ENCODE measurements at regions of chr19 and their contacts with region 1.

Region 1: GRCh38 chr19:15555759-15556633 is 47.7 kb downstream of the CYP4F22 start:
- DNase-seq: peak; percentile 89
- H3K4me3 ChIP-seq: peak overlapping the region in 2 of 3 experiments; percentile 7 to 13
- H3K27ac ChIP-seq: no peak overlapping the region
- H3K4me1 ChIP-seq: peaks cover 15% of the 10 kb centered on the region
- H3K27me3 ChIP-seq: no peaks in the 10 kb centered on the region
- CTCF ChIP-seq: peak; percentile 64 to 88

Region 2: GRCh38 chr19:15091901-15092753 is 463.9 kb before region 1 on chr19:
- CTCF ChIA-PET with region 1: no interaction called
- dilution Hi-C with region 1: no loop called
- in situ Hi-C with region 1: loop called (anchors 10 kb)
- intact Hi-C with region 1: loop called (anchors 1 kb)
- DNase-seq: peak; percentile 41
- H3K4me3 ChIP-seq: no peak overlapping the region
- H3K27ac ChIP-seq: no peak overlapping the region
- H3K4me1 ChIP-seq: peaks cover 5% of the 10 kb centered on the region
- H3K27me3 ChIP-seq: no peaks in the 10 kb centered on the region
- CTCF ChIP-seq: peak; percentile 51 to 58

Region 3: DNA sequence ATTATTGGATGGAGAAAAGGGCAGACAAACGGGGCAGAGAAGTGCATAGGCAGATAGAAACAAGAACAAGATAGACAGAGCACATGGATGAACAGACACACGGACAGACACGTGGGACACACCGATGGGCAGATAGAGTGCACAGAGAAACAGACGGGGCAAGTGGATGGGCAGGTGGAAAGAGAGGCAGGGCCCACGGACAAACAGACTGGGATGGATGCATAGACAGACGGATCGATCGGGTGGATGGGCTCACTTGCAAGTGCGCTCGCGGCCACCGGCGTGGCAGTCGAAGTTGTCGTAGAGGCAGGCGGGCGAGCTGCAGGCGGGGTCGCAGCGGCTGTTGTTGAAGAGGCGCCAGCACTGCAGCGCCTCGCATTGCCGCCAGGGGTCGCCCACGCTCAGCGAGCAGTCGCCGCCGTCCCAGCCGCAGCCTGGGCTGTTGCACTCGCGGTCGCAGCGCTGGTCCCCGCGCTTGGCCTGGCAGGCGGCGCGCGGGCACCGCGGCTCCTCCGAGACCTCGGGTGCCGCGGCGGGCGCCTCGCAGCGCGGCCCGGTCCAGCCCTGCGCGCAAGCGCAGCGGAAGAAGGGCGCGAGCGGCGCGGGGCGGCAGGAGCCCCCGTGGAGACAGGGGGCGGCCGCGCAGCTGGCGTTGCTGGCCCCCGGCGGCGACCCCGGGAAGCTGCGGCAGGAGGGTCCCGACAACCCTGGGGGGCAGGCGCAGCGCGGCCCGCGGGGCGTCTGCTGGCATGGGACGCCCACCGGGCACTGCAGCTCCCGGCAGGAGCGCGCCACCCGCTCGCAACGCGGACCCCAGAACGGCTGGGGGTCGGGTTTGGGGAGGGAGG is 378.5 kb before region 1 on chr19:
- CTCF ChIA-PET with region 1: no interaction called
- dilution Hi-C with region 1: no loop called
- in situ Hi-C with region 1: loop called (anchors 5 to 10 kb)
- intact Hi-C with region 1: loop called (anchors 1 kb)
- DNase-seq: peak; percentile 48
- H3K4me3 ChIP-seq: peak overlapping the region in 1 of 3 experiments; percentile 35
- H3K27ac ChIP-seq: no peak overlapping the region
- H3K4me1 ChIP-seq: peaks cover 15% of the 10 kb centered on the region
- H3K27me3 ChIP-seq: no peaks in the 10 kb centered on the region
- CTCF ChIP-seq: peak; percentile 74 to 79

Region 4: DNA sequence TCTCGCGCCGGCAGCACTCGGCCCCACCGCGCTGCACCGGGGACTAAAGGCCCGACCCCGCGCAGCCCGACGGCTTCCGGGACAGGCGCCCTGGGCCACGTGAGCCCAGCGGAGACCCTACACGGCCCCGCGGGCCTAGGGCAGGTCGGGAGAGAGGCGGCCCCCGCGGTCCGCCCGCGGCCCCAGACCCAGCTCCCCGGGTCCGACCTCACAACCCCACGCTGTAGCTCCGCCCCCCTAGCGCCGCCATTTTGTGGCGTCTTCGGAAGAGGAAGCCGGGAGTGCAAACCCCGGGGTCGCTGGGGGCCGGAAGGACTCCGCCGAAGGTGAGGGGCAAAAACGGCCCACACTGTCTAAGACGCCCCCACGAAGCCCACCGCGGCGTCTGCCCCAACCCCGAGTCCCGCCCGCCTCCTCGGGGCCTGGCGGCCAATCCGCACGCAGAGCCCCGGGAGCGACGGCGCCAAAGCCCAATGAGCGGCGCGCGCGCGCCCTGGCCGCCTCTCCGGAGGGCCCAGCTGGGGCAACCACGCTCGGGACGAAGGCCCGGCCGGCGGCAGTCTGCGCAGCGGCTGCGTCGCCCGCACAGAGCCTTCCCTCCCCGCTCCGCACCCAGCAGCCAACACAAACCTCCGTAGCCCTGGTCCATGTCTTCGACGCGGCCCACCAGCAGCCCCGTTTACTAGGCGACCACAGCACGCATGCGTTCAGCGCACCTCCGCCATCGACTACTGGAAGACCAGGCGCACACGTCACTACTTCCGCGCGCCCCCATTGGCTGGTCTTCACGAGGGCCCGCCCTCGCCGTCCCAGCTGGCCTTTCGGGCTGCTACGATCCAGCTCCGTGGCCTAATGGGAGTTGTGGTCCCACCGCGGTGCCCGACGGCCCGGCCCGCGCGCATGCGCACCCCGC is 176.7 kb before region 1 on chr19 and contains the start of gene AKAP8:
- CTCF ChIA-PET with region 1: interaction called, 3 read pairs
- dilution Hi-C with region 1: no loop called
- in situ Hi-C with region 1: no loop called
- intact Hi-C with region 1: loop called (anchors 1 kb)
- DNase-seq: peak; percentile 99
- H3K4me3 ChIP-seq: peak within 1 kb of the TSS; percentile 88 to 100 (median 91)
- H3K27ac ChIP-seq: peak within 1 kb of the TSS; percentile 86
- H3K4me1 ChIP-seq: peaks cover 24% of the 10 kb centered on the region
- H3K27me3 ChIP-seq: no peaks in the 10 kb centered on the region
- CTCF ChIP-seq: no peak
- total RNA-seq, gene AKAP8: 12.8 to 33.2 TPM

Region 5: DNA sequence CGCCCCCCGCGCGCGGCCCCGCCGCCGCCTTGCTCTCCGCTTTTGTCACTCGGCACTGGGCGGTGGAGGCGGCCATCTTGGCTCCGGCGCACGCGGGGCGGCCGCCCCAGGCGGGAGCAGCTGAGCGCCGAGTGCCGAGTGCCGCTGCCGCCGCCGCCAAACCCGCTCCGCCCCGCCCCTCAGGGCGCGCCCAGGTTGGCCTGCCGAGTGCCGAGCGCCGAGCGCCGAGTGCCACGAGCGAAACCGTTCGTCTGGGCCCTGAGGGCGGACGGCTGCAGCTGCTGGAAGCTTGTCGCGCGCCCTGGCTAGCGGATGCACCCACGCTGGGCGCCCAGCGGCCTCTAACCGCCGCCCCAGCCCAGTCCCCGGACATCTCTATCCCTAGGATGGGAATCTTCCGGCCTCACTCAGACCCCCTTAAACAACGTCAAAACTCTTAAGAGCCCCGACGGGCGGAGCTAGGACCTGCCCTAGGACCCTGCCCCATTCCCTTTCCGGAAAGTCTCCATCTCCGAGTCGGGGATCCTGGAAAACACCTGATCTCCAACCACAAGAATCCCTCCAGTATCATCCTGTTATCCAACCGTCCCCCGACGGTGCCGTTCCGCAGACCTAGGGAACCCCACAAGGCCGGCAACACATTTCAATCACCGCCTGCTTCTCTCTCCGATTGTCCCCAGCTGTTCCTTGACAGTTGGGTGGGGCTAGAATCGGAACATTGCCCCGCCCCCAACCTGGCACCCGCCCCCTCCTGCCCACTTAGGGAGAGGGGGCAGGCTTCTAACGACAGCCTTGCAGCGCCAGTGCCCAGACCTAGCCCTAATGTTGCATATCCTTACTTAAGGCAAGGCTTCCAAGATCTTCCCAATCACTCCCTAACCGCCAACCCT is 123.1 kb before region 1 on chr19:
- CTCF ChIA-PET with region 1: interaction called, 9 read pairs
- dilution Hi-C with region 1: no loop called
- in situ Hi-C with region 1: no loop called
- intact Hi-C with region 1: loop called (anchors 5 kb)
- DNase-seq: peak; percentile 86
- H3K4me3 ChIP-seq: peak overlapping the region; percentile 68 to 90 (median 69)
- H3K27ac ChIP-seq: peak overlapping the region; percentile 42
- H3K4me1 ChIP-seq: peaks cover 11% of the 10 kb centered on the region
- H3K27me3 ChIP-seq: no peaks in the 10 kb centered on the region
- CTCF ChIP-seq: no peak

Region 6: DNA sequence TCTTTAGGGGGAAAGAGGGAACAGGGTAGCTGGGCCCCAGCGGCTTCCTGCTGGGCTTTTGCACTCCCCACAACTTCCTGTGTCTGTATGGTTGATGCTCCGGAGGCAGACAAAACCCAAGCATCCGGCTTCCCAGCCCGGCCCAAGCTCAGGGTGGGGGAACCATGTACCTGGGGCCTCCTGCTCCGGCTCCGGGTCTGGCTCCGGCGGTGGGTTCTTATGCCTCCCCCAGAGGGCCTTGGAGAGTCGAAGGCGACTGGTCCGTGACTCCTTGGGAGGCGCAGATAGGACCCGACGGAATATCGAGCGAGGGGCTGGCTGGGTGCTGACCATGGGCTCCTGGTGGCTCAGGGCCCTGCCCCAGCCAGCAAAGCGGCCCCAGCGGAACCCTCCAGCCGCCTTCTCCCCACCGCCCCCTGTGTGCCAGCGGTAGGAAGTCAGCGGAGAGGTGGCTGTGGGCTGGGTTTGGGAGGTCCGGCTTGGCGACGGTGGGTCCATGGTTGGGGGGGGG is 92.1 kb before region 1 on chr19:
- CTCF ChIA-PET with region 1: no interaction called
- dilution Hi-C with region 1: loop called (anchors 5 kb)
- in situ Hi-C with region 1: loop called in 1 of 2 experiments (anchors 10 kb)
- intact Hi-C with region 1: no loop called
- DNase-seq: no peak
- H3K4me3 ChIP-seq: no peak overlapping the region
- H3K27ac ChIP-seq: no peak overlapping the region
- H3K4me1 ChIP-seq: no peaks in the 10 kb centered on the region
- H3K27me3 ChIP-seq: peaks cover 1% of the 10 kb centered on the region
- CTCF ChIP-seq: no peak